Activated CD8-positive, alpha-beta T cell treated with anti-CD3 and anti-CD28 coated beads for 36 hours (primary cell): ENCODE measurements at regions of chr1 and their contacts with region 1.

Region 1: DNA sequence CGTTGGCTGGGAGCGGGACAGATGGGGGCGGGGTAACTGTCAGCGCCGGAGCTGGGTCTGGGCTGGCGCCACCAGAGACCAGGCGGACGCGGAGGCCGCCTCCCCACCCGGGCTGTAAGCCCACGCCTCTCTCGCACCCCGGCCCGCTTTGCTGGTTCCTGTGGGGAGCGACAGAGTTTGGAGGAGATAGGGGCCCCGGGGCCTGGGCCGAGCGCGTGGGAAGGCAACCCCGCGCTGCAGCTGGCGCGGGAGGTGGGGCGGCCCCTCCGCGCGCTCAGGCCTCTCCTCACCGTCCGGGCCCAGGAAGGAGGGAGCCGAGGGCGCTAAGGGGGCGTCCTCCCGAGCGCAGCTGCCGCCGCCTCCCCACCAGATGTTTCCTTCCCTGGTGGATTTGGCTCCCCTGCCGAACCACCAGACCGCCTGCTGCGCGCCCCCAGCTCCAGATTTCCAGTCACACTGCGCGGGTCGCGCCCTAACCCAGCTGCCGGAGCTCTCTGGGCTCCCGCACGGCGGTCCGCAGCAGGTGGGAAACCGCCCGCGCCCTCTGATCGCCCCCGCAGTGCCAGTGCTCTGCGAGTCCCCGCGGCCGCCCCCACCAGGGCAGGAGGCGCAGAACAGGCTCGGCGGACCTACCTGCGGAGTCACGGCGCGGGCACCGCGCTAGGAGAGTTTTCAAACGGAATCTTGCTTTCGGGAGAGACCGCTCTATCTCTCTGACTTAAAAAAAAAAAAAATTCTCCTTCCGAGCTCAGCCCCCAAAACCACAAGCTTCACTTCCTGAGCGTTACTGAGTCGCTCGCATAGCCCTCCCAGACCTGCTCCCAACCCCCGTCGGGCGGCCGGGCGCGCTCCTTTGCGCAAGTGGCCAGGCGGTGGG is 1.1 kb downstream of the GFI1 start:
- DNase-seq: peak; percentile 95
- ATAC-seq: peak; percentile 57
- H3K4me3 Mint-ChIP-seq: peak overlapping the region; percentile 98
- H3K27ac Mint-ChIP-seq: peak overlapping the region; percentile 98
- H3K4me1 Mint-ChIP-seq: peaks cover 28% of the 10 kb centered on the region
- H3K27me3 Mint-ChIP-seq: no peaks in the 10 kb centered on the region
- CTCF ChIP-seq: peak; percentile 72

Region 2: DNA sequence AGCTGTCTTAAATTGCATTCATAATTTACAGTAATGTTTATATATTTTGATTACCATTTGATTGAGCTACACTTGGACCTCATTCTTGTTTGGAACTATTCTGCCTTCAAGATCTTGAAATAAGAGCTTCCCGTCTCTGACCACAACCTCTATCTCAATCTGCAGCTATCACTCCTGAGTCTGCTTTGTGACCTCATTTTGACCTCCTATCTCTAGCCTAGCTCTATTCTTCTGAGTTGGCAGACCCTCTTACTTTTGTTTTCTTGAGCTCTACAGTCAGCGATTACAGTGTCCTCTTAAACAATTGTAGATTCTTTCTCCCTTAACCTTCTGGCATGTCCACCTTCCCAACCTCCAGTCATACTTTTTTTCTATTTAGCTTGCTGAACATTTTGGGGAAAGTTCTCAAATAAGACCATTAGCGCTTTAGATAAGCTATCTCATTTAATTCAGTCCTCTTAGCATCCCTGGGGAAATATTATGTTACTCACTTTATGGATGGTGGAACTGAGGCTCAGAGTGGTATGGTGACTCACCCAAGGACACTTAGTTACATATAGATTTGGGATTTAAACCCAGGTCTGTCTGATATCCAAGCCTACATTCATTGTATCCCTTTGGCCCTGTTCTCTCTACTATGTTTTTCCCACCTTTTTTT is 167.7 kb before region 1 on chr1:
- CTCF ChIA-PET with region 1: interaction called, 21 read pairs
- POLR2A ChIA-PET with region 1: interaction called, 57 read pairs
- intact Hi-C with region 1: loop called (anchors 5 kb)
- DNase-seq: peak; percentile 28
- ATAC-seq: peak; percentile 72
- H3K4me3 Mint-ChIP-seq: no peak overlapping the region
- H3K27ac Mint-ChIP-seq: peak overlapping the region; percentile 70
- H3K4me1 Mint-ChIP-seq: peaks cover 56% of the 10 kb centered on the region
- H3K27me3 Mint-ChIP-seq: no peaks in the 10 kb centered on the region
- CTCF ChIP-seq: no peak

Region 3: GRCh38 chr1:92536980-92537884 is 51.6 kb after region 1 on chr1:
- CTCF ChIA-PET with region 1: interaction called, 51 read pairs
- POLR2A ChIA-PET with region 1: interaction called, 213 read pairs
- intact Hi-C with region 1: loop called (anchors 2 kb)
- DNase-seq: peak; percentile 27
- ATAC-seq: peak; percentile 56
- H3K4me3 Mint-ChIP-seq: peak overlapping the region; percentile 64
- H3K27ac Mint-ChIP-seq: peak overlapping the region; percentile 89
- H3K4me1 Mint-ChIP-seq: peaks cover 80% of the 10 kb centered on the region
- H3K27me3 Mint-ChIP-seq: no peaks in the 10 kb centered on the region
- CTCF ChIP-seq: no peak

Region 4: GRCh38 chr1:92583821-92584760 is 98.5 kb after region 1 on chr1:
- CTCF ChIA-PET with region 1: interaction called, 18 read pairs
- POLR2A ChIA-PET with region 1: interaction called, 48 read pairs
- intact Hi-C with region 1: loop called (anchors 5 kb)
- DNase-seq: peak; percentile 27
- ATAC-seq: peak; percentile 65
- H3K4me3 Mint-ChIP-seq: peak overlapping the region; percentile 69
- H3K27ac Mint-ChIP-seq: peak overlapping the region; percentile 95
- H3K4me1 Mint-ChIP-seq: peaks cover 66% of the 10 kb centered on the region
- H3K27me3 Mint-ChIP-seq: no peaks in the 10 kb centered on the region
- CTCF ChIP-seq: peak; percentile 62